Endothelial cell of umbilical vein (primary cell): ENCODE measurements at regions of chr2 and their contacts with region 1.

Region 1: GRCh38 chr2:196453613-196454047 is 185.9 kb upstream of the CCDC150 start:
- DNase-seq: peak; percentile 78
- H3K4me3 ChIP-seq: no peak overlapping the region
- H3K27ac ChIP-seq: no peak overlapping the region
- H3K4me1 ChIP-seq: peaks cover 4% of the 10 kb centered on the region
- H3K27me3 ChIP-seq: no peaks in the 10 kb centered on the region
- CTCF ChIP-seq: peak; percentile 54 to 73
- POLR2A ChIP-seq: no peak

Region 2: GRCh38 chr2:196291873-196292800 is 161.5 kb before region 1 on chr2:
- CTCF ChIA-PET with region 1: interaction called, 23 read pairs
- POLR2A ChIA-PET with region 1: no interaction called
- dilution Hi-C with region 1: no loop called
- intact Hi-C with region 1: no loop called
- DNase-seq: no peak
- H3K4me3 ChIP-seq: no peak overlapping the region
- H3K27ac ChIP-seq: no peak overlapping the region
- H3K4me1 ChIP-seq: peaks cover 27% of the 10 kb centered on the region
- H3K27me3 ChIP-seq: no peaks in the 10 kb centered on the region
- CTCF ChIP-seq: no peak
- POLR2A ChIP-seq: no peak

Region 3: DNA sequence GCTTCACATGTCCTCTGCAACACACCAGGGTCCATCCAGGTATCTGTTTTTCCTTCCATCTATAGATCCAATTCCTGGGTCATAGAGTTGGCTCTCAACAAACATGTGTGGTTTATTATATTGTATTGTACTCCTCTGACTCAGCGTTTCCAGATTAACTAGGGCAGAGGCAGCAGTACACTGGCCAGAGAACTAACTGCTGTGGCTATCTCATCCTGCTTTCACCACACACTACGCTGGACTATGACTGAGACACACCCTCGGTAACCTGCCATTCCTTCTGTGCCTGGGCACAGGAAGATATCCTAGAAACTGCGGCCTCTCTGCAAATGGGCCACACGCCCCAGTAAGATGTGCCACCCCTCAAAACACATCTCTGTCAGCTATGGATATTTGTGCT is 122.5 kb before region 1 on chr2:
- CTCF ChIA-PET with region 1: interaction called, 96 read pairs
- POLR2A ChIA-PET with region 1: no interaction called
- dilution Hi-C with region 1: no loop called
- intact Hi-C with region 1: loop called (anchors 2 kb)
- DNase-seq: peak; percentile 84
- H3K4me3 ChIP-seq: peak overlapping the region in 1 of 3 experiments; percentile 26
- H3K27ac ChIP-seq: peak overlapping the region; percentile 85
- H3K4me1 ChIP-seq: peaks cover 46% of the 10 kb centered on the region
- H3K27me3 ChIP-seq: no peaks in the 10 kb centered on the region
- CTCF ChIP-seq: no peak
- POLR2A ChIP-seq: no peak

Region 4: GRCh38 chr2:196356332-196356731 is 97.3 kb before region 1 on chr2:
- CTCF ChIA-PET with region 1: interaction called, 36 read pairs
- POLR2A ChIA-PET with region 1: no interaction called
- dilution Hi-C with region 1: no loop called
- intact Hi-C with region 1: no loop called
- DNase-seq: peak; percentile 48
- H3K4me3 ChIP-seq: peak overlapping the region in 2 of 3 experiments; percentile 8 to 36
- H3K27ac ChIP-seq: no peak overlapping the region
- H3K4me1 ChIP-seq: peaks cover 36% of the 10 kb centered on the region
- H3K27me3 ChIP-seq: no peaks in the 10 kb centered on the region
- CTCF ChIP-seq: no peak
- POLR2A ChIP-seq: no peak

Region 5: DNA sequence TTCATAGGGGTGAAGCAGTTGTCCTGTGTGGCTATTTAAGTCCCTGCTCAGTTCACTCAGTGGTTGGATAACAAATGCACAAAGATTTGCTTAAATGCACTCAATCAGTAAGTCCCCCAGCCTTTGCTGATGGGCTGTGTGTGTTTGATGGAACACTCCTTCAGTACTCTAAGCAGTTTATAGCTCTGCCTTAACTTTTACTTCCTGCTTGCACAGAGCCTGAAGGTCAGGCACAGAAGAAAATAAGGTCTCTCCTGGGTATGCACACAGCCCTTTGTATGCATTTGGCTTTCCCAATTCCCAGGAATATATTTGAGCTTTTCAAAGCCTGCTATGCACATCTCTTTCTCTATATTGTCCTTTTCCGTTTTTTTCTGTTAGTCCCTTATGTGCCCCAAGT is 73.5 kb before region 1 on chr2:
- CTCF ChIA-PET with region 1: interaction called, 10 read pairs
- POLR2A ChIA-PET with region 1: no interaction called
- dilution Hi-C with region 1: no loop called
- intact Hi-C with region 1: no loop called
- DNase-seq: no peak
- H3K4me3 ChIP-seq: no peak overlapping the region
- H3K27ac ChIP-seq: no peak overlapping the region
- H3K4me1 ChIP-seq: no peaks in the 10 kb centered on the region
- H3K27me3 ChIP-seq: no peaks in the 10 kb centered on the region
- CTCF ChIP-seq: no peak
- POLR2A ChIP-seq: no peak

Region 6: DNA sequence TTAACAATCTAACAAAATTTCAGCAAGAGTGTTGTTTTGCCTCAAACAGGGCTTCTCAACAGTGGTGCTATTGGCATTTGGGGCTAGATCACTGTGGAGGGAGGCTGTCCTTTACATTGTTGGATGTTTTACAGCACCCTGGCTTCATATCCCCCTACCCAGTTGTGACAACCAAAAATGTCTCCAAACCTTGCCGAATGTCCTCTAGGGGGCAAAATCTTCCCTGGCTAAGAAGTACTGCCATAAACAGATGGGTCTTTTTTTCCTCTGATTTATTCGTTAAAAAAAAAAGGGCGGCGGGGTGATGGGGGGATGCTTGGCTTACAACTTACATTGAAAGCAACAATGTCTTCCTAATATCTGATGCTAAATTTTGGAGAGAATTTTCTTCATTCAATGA is 21.7 kb before region 1 on chr2:
- CTCF ChIA-PET with region 1: interaction called, 39 read pairs
- POLR2A ChIA-PET with region 1: no interaction called
- dilution Hi-C with region 1: no loop called
- intact Hi-C with region 1: loop called (anchors 2 kb)
- DNase-seq: peak; percentile 28
- H3K4me3 ChIP-seq: no peak overlapping the region
- H3K27ac ChIP-seq: no peak overlapping the region
- H3K4me1 ChIP-seq: peaks cover 55% of the 10 kb centered on the region
- H3K27me3 ChIP-seq: no peaks in the 10 kb centered on the region
- CTCF ChIP-seq: peak; percentile 29 to 38
- POLR2A ChIP-seq: no peak

Region 7: GRCh38 chr2:196758474-196759377 is 305.1 kb after region 1 on chr2:
- CTCF ChIA-PET with region 1: no interaction called
- POLR2A ChIA-PET with region 1: no interaction called
- dilution Hi-C with region 1: no loop called
- intact Hi-C with region 1: loop called (anchors 1 kb)
- DNase-seq: peak; percentile 40
- H3K4me3 ChIP-seq: no peak overlapping the region
- H3K27ac ChIP-seq: no peak overlapping the region
- H3K4me1 ChIP-seq: no peaks in the 10 kb centered on the region
- H3K27me3 ChIP-seq: no peaks in the 10 kb centered on the region
- CTCF ChIP-seq: peak in 1 of 2 donors; percentile 26
- POLR2A ChIP-seq: no peak